Cardiac septum (tissue), 1 donor: ENCODE measurements at regions of chr7 and their contacts with region 1.

Region 1: DNA sequence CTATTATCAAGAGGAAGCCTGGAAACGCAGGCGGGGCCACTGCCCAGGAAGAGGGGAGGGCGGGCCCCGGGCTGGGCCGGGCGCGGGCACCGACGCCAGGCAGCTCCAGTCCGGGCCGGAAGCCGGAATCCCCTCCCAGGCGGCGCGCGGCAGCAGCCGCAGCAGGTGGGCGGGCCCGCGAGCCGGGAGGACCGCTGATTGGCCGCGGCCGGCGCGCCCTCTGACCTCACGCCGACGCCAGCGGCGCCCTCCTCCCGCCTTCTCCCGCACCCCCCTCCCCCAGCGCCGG is 438 bp downstream of the BCL7B start:
- DNase-seq: peak; percentile 96

Region 2: GRCh38 chr7:73578342-73579127 is 21.5 kb after region 1 on chr7 and contains the start of gene TBL2:
- intact Hi-C with region 1: loop called (anchors 1 kb)
- DNase-seq: peak; percentile 100
- total RNA-seq, gene TBL2: 13.6 TPM

Region 3: GRCh38 chr7:73769992-73770859 is 213.2 kb after region 1 on chr7 and contains the start of gene CLDN3:
- intact Hi-C with region 1: no loop called
- DNase-seq: no peak
- total RNA-seq, gene CLDN3: not detected

Region 4: DNA sequence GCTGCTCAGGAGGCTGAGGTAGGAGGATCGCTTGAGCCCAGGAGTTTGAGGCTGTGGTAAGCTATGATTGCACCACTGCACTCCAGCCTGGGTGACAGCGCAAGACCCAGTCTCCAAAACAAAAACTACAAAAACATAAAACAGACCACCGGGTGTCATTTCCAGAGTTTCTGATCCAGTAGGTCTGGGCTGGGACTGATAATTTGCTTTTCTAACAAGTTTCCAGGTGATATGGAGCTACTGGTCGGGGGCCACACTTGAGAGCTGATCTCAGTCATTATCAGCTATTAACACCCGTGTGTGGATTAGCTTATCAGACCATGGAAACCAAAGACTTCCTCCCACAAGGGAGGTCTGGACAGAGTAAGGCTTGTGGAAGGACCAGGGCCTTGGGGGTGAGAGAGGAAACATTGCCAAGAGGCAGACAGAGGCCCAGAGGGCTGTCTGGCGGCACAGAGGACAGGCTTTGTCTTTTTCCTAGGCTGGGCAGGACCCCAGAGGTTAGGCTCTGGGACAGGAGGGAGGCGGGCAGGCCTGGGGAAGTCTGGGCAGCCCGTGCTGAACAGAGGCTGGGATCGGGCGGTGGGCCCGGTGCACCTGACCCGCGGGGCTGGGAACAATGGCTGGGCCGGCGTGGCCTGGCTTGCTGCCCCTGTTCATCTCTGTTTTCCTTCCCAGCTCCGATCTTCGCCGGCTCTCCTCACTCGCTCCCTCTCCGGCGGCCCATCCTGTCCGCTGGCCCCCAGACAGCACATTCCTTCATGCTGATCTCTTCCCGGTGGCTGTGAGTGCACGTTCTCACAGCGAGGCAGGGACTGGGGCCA is 329.1 kb after region 1 on chr7:
- intact Hi-C with region 1: no loop called
- DNase-seq: no peak

Region 5: DNA sequence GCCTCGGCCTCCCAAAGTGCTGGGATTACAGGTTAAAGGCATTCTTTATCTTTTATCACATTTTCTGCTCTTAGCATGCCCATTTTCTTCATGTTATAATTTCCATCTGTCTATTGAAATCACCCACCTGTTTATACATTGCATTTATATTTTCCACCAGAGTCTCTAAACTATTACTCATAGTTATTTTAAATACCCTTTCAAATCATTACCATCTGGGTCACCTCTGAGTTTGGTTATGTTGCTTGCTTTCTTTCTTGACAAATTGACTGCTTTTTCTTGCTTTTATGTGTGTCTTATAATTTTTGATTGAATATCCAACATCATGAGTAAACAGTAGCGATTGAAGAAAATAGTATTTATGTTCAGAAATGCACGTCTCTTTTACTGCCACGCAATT is 375.3 kb after region 1 on chr7:
- intact Hi-C with region 1: no loop called
- DNase-seq: no peak